Activated CD4-positive, alpha-beta memory T cell treated with anti-CD3 and anti-CD28 coated beads for 36 hours (primary cell): ENCODE measurements at regions of chr5 and their contacts with region 1.

Region 1: DNA sequence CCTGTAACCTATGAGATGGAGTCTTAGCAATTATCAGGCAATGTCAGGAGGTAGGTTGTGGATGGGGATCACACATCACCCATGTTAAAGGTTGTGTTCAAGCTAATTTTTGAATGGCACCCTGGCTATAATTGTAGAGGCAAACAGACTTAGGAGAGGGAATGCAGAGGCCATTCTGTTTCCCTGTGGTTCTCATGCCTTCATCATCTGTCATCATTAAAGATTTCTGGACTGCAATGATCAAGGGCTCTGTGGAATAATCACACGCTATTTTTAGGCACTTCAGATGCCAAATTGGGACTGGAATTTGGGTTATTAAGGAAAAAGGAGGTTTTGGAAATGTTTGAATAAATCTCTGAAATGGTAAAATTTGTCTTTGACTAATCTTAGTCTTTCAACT is 1065.4 kb downstream of the TAF11L14 start:
- DNase-seq: no peak
- H3K4me3 Mint-ChIP-seq: no peak overlapping the region
- H3K27ac Mint-ChIP-seq: no peak overlapping the region
- H3K4me1 Mint-ChIP-seq: peaks cover 18% of the 10 kb centered on the region
- H3K27me3 Mint-ChIP-seq: no peaks in the 10 kb centered on the region

Region 2: GRCh38 chr5:18236386-18236785 is 463.3 kb before region 1 on chr5:
- CTCF ChIA-PET with region 1: no interaction called
- POLR2A ChIA-PET with region 1: no interaction called
- intact Hi-C with region 1: no loop called
- DNase-seq: no peak
- H3K4me3 Mint-ChIP-seq: no peak overlapping the region
- H3K27ac Mint-ChIP-seq: no peak overlapping the region
- H3K4me1 Mint-ChIP-seq: no peaks in the 10 kb centered on the region
- H3K27me3 Mint-ChIP-seq: no peaks in the 10 kb centered on the region

Region 3: DNA sequence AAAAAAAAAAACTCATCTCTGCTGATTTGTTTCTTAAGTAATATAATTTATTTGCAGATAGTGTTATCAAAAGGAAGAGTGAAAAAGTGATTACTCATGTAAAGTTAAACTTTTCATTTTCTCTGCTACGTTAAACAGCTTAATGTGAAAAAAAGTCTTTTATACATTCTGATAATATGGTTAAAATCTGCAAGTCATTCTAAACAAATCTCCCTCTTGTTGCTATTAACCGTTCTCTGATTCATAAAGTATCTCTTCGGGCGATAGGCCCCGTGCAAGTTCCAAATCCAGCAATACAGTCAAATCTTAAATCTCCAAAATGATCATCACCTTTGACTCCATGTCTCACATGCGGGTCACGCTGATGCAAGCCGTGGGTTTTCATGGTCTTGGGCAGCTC is 333.4 kb before region 1 on chr5:
- CTCF ChIA-PET with region 1: no interaction called
- POLR2A ChIA-PET with region 1: no interaction called
- intact Hi-C with region 1: no loop called
- DNase-seq: no peak
- H3K4me3 Mint-ChIP-seq: no peak overlapping the region
- H3K27ac Mint-ChIP-seq: no peak overlapping the region
- H3K4me1 Mint-ChIP-seq: no peaks in the 10 kb centered on the region
- H3K27me3 Mint-ChIP-seq: no peaks in the 10 kb centered on the region

Region 4: DNA sequence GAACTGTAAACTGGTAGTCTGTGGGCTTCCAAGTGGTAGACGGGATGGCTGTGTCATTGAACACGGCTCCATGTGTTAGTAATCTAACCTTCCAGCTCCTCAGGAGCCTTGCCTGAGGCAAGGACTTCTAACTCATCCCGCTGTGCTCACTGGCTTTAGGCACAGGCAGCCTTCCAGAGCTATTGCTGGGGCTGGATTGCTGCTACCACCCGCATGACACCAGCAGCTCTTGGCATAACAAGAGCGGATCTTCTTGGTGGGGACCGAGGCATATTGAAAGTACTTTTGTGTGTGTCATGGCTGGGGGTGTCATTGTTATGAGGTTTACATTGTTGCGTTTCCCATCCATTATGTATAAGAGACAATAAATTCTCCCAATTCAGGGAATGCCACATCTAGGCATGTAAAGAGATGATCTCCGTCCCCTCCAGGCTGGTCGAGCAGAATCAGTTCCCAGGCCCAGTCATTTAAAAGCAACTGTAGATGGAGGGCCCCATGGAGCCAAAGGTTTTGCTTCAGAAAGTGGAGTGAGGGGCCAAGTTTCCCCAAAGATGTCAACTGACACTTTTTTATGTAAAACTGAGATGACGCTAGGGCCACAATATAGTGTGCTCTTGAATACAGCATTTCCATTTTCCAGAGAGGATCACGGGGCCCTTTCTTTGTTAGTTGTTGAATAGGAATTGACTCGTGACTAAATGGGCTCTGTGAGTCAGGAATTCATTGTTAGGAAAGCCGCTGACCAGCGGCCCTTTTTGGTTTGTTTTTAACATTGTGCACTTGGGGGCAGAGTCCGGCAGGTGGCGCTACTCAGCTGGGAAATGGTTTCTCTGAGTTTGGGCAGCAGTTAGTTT is 305.9 kb before region 1 on chr5:
- CTCF ChIA-PET with region 1: interaction called, 4 read pairs
- POLR2A ChIA-PET with region 1: no interaction called
- intact Hi-C with region 1: loop called (anchors 1 kb)
- DNase-seq: peak; percentile 55
- H3K4me3 Mint-ChIP-seq: no peak overlapping the region
- H3K27ac Mint-ChIP-seq: no peak overlapping the region
- H3K4me1 Mint-ChIP-seq: no peaks in the 10 kb centered on the region
- H3K27me3 Mint-ChIP-seq: no peaks in the 10 kb centered on the region

Region 5: GRCh38 chr5:18465833-18466591 is 233.7 kb before region 1 on chr5:
- CTCF ChIA-PET with region 1: interaction called, 10 read pairs
- POLR2A ChIA-PET with region 1: no interaction called
- intact Hi-C with region 1: loop called (anchors 1 kb)
- DNase-seq: peak; percentile 44
- H3K4me3 Mint-ChIP-seq: no peak overlapping the region
- H3K27ac Mint-ChIP-seq: no peak overlapping the region
- H3K4me1 Mint-ChIP-seq: no peaks in the 10 kb centered on the region
- H3K27me3 Mint-ChIP-seq: no peaks in the 10 kb centered on the region

Region 6: GRCh38 chr5:18745646-18746615 is 46.2 kb after region 1 on chr5:
- CTCF ChIA-PET with region 1: no interaction called
- POLR2A ChIA-PET with region 1: no interaction called
- intact Hi-C with region 1: loop called (anchors 1 kb)
- DNase-seq: peak; percentile 49
- H3K4me3 Mint-ChIP-seq: peak overlapping the region; percentile 85
- H3K27ac Mint-ChIP-seq: peak overlapping the region; percentile 84
- H3K4me1 Mint-ChIP-seq: peaks cover 59% of the 10 kb centered on the region
- H3K27me3 Mint-ChIP-seq: no peaks in the 10 kb centered on the region